Tibial artery (tissue), 4 donors: ENCODE measurements at regions of chr20 and their contacts with region 1.

Region 1: GRCh38 chr20:1894951-1895673 is at the start of gene SIRPA:
- DNase-seq: peak; percentile 64 to 87
- H3K4me3 ChIP-seq: peak within 1 kb of the TSS; percentile 57 to 72
- H3K27ac ChIP-seq: peak within 1 kb of the TSS; percentile 88 to 97
- H3K4me1 ChIP-seq: peaks cover 0 to 74% (median 55%) of the 10 kb centered on the region in 4 donors
- H3K27me3 ChIP-seq: no peaks in the 10 kb centered on the region
- CTCF ChIP-seq: no peak

Region 2: DNA sequence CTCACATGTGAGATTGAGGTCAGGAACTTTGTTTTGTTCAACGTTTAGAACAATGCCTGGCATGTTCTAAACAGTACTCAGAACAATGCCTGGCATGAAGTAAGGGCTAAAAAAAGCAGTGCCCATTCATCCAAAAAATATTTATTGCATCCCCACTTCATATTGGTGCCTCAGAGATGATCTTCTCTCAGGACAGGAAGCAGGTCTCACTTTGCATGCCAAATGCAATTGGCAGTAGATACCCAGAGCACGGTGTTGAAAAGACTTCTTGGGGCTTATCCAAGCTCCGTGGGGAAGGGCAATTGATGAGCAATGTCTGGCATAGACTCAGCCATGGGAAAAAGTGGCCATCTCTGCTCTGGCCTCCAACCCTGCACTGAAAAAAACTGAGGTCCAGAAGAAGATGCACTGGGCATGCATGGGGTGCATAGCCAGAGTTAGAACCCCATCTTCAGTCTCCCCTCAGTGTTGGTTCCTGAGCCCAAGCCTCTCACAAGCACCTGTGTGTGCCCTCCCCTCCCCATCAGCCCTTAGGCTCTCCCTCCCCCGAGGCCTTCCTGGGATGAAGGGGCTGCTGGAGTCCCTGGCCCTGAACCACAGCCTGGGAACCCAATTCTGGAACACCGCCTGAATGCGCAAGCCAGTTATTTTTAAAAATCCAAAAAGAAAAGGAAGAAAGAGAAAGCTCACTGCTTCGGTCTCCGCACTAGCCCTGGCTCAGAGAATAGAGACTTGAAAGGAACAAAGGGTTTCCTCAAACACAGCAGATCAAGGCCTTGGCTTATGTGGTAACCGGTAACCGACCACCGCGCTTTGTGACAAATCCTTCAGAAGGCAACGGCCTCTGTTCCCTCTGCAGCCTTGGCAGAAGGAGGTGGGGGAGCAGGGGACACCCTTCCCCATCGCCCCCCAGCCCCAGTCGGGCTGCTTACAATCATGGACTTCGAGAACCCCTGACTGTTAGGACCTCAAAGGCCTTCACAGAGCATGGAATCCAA is 78.4 kb before region 1 on chr20:
- intact Hi-C with region 1: loop called (anchors 5 kb)
- DNase-seq: peak in 1 of 2 donors; percentile 75
- H3K4me3 ChIP-seq: no peak overlapping the region
- H3K27ac ChIP-seq: peak overlapping the region; percentile 70 to 77
- H3K4me1 ChIP-seq: peaks cover 0 to 79% (median 58%) of the 10 kb centered on the region in 4 donors
- H3K27me3 ChIP-seq: no peaks in the 10 kb centered on the region
- CTCF ChIP-seq: no peak

Region 3: DNA sequence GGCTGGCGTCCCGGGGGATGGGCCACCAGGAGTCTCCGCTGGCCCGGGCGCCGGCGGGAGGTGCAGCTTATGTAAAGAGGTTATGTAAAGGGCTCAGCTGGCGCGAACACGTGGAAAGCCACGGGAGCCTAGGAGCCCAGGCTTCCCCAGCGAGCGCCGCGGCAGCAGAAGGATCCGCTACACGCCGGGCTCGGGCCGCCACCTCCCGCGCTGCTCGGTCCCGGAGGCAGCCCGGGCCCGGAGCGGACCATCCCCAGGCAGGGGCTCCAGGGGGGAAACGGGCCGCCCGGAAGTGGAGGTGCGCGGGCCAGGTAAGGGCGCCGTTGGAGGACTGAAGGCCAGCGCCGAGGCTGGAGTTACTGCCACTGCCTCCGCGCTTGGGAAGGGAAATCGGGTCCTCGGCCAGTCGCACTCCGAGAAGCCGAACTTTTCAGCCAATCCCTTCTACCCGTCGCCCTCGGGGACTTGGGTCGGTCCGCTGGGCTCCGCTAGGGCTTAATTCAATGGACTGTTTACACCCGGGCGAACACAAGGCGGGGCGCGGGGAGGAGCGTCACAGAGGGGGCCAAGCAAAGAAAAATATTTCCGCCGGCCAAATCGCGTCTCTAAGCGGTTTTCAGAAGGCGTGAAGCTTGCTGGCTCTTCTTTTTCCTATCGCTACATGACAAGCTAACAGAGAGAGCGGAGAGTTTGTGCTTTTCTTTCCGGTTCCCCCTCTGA is 206.9 kb after region 1 on chr20:
- intact Hi-C with region 1: loop called (anchors 5 kb)
- DNase-seq: peak; percentile 91 to 95
- H3K4me3 ChIP-seq: peak overlapping the region; percentile 84 to 98
- H3K27ac ChIP-seq: peak overlapping the region; percentile 98 to 99
- H3K4me1 ChIP-seq: peaks cover 0 to 39% (median 26%) of the 10 kb centered on the region in 4 donors
- H3K27me3 ChIP-seq: no peaks in the 10 kb centered on the region
- CTCF ChIP-seq: peak in 1 of 2 experiments; percentile 36